Naive thymus-derived CD4-positive, alpha-beta T cell (primary cell): ENCODE measurements at regions of chr15 and their contacts with region 1.

Region 1: GRCh38 chr15:85318048-85318731 is 62.2 kb upstream of the AKAP13 start:
- DNase-seq: peak in 1 of 9 donors; percentile 29
- ATAC-seq: peak; percentile 61
- H3K4me3 ChIP-seq: no peak overlapping the region
- H3K4me3 Mint-ChIP-seq: peak overlapping the region in 2 of 10 donors; percentile 16 to 74
- H3K27ac ChIP-seq: no peak overlapping the region
- H3K27ac Mint-ChIP-seq: peak overlapping the region in 4 of 9 donors; percentile 22 to 90 (median 27)
- H3K4me1 ChIP-seq: peaks cover 28 to 29% of the 10 kb centered on the region in 2 donors
- H3K4me1 Mint-ChIP-seq: peaks cover 22 to 53% (median 35%) of the 10 kb centered on the region in 7 donors
- H3K27me3 ChIP-seq: no peaks in the 10 kb centered on the region
- H3K27me3 Mint-ChIP-seq: no peaks in the 10 kb centered on the region

Region 2: DNA sequence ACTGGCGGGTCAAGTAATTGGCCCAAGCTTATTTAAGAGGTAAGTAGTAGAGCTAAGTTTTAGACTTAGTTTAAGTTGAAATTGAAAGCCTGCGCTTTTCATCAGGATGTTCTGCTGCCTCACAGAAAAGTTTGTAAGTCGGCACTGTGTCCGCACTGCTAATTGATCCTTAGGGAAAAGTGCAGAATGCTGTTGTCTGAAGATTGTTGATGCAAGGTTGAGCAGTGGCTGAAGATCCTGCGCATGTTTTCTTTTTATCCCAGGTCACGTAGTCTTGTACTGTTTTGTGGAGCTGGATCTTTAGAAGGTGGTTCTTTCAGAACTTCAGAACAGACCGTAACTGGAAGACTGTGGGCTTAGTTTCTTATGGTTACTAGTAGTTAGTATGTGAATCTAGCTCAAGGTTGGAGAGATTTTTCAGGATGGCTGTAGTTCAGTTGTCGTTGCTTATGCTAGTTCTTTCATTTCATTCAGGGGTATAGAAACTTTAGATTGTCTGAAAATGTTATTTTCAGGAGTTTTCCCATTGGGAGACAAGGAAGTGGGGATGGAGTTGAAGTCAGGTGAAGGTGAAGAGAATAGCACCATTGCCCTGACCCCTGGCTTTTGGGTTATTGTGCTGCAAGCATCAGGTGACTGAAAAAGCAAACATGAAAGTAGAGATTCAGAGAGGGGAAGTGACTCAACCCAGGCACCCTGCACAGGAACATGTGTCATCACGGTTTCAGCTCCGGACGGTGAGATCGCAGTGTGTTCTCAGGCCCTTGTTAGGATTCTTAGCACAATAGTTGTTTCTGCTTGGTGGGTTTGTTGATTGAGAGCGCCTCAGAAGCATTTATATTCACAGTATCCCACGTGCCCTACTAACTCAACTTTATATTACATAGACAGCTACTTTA is 95.0 kb after region 1 on chr15:
- CTCF ChIA-PET with region 1: interaction called, 5 read pairs
- POLR2A ChIA-PET with region 1: no interaction called
- intact Hi-C with region 1: loop called in 1 of 2 experiments (anchors 5 kb)
- DNase-seq: peak; percentile 21 to 68 (median 43)
- ATAC-seq: peak; percentile 96
- H3K4me3 ChIP-seq: no peak overlapping the region
- H3K4me3 Mint-ChIP-seq: peak overlapping the region; percentile 18 to 81 (median 72)
- H3K27ac ChIP-seq: peak overlapping the region; percentile 47
- H3K27ac Mint-ChIP-seq: peak overlapping the region; percentile 71 to 91 (median 87)
- H3K4me1 ChIP-seq: peaks cover 26 to 29% of the 10 kb centered on the region in 2 donors
- H3K4me1 Mint-ChIP-seq: peaks cover 29 to 76% (median 63%) of the 10 kb centered on the region in 7 donors
- H3K27me3 ChIP-seq: no peaks in the 10 kb centered on the region
- H3K27me3 Mint-ChIP-seq: no peaks in the 10 kb centered on the region